Esophagus muscularis mucosa (tissue), 4 donors: ENCODE measurements at regions of chr10 and their contacts with region 1.

Region 1: DNA sequence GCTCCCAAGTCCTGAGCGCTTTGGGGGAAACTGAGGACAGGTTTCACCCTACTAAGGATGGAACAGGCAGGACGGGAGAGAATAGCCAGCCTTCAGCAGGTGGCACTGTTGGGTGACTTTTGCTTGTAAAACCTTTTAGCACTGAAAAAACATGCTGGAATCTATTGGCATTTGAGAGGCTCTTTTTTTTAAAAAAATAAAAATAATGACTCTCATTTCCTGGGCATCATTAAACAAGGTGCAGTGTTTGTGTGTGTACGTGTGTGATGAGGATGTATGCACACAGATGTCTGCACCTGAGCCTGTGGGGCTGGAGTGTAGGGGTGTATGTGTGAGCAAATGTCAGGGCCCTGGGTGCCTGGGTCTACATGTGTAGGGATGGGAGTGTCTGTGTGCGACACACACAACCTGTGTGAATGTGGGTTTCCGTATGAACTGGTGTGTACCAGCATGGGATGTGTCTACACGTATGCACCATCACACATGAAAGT is 177.9 kb downstream of the RPS24 start:
- DNase-seq: no peak
- H3K4me3 ChIP-seq: no peak overlapping the region
- H3K27ac ChIP-seq: peak overlapping the region; percentile 45 to 64 (median 60)
- H3K4me1 ChIP-seq: peaks cover 31 to 41% (median 38%) of the 10 kb centered on the region in 4 donors
- H3K27me3 ChIP-seq: no peaks in the 10 kb centered on the region
- CTCF ChIP-seq: peak; percentile 50 to 71 (median 64)
- EP300 ChIP-seq: no peak
- POLR2A ChIP-seq: no peak

Region 2: GRCh38 chr10:78510566-78511323 is 299.1 kb after region 1 on chr10:
- intact Hi-C with region 1: loop called (anchors 10 kb)
- DNase-seq: peak; percentile 92
- H3K4me3 ChIP-seq: no peak overlapping the region
- H3K27ac ChIP-seq: peak overlapping the region; percentile 75 to 80 (median 76)
- H3K4me1 ChIP-seq: peaks cover 11 to 92% (median 88%) of the 10 kb centered on the region in 4 donors
- H3K27me3 ChIP-seq: no peaks in the 10 kb centered on the region
- CTCF ChIP-seq: no peak
- EP300 ChIP-seq: no peak
- POLR2A ChIP-seq: no peak

Region 3: GRCh38 chr10:78566284-78567111 is 354.9 kb after region 1 on chr10:
- intact Hi-C with region 1: no loop called
- DNase-seq: no peak
- H3K4me3 ChIP-seq: no peak overlapping the region
- H3K27ac ChIP-seq: peak overlapping the region; percentile 18 to 48 (median 40)
- H3K4me1 ChIP-seq: peaks cover 3 to 56% (median 42%) of the 10 kb centered on the region in 4 donors
- H3K27me3 ChIP-seq: no peaks in the 10 kb centered on the region
- CTCF ChIP-seq: no peak
- EP300 ChIP-seq: no peak
- POLR2A ChIP-seq: no peak

Region 4: DNA sequence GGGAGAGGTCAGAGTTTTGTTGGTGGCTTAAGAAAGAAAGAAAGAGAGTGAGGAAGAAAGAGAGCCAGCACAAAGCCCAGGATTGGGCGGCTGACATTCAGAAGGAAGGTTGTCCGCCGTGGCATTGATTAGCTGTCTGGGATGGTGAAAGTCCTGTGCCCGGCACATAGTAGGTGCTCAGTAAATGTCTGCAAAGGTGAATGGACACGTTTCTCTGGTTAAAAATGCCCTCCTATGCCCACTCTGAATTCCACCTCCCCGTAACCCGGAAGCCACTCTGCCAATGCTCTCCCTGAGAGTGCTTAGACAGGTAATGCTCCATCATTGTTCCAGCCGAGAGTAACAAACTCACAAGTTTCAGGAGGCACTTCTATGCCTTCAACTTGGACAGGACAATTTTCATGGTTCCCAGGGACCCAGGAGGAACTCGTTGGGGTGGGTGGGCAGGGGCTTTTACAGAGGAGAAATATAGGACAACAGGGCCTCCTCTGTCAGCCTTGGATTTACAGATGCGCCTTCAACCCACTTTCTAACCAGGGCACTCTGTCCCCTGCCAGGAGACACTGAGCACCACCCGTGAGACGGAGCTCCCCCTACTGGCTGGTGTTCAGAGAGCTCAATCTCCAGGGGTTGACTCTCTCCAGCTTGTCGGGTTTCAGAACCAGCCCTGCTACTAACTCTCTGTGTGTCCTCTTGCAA is 445.7 kb after region 1 on chr10:
- intact Hi-C with region 1: loop called (anchors 5 kb)
- DNase-seq: no peak
- H3K4me3 ChIP-seq: no peak overlapping the region
- H3K27ac ChIP-seq: peak overlapping the region in 2 of 4 donors; percentile 23 to 58
- H3K4me1 ChIP-seq: peaks cover 0 to 30% (median 13%) of the 10 kb centered on the region in 4 donors
- H3K27me3 ChIP-seq: no peaks in the 10 kb centered on the region
- CTCF ChIP-seq: peak; percentile 67 to 79 (median 68)
- EP300 ChIP-seq: no peak
- POLR2A ChIP-seq: no peak